Activated T-helper 2 cell treated with anti-CD3 and anti-CD28 coated beads, Interferon-gamma antibody, Interleukin-2, Interleukin-4, amounts not matched to agents 10 μg/mL and 5 μg/mL and 100 μg/mL, durations not matched to agents 14 hours and 24 hours and 36 hours (primary cell): ENCODE measurements at regions of chr6 and their contacts with region 1.

Region 1: DNA sequence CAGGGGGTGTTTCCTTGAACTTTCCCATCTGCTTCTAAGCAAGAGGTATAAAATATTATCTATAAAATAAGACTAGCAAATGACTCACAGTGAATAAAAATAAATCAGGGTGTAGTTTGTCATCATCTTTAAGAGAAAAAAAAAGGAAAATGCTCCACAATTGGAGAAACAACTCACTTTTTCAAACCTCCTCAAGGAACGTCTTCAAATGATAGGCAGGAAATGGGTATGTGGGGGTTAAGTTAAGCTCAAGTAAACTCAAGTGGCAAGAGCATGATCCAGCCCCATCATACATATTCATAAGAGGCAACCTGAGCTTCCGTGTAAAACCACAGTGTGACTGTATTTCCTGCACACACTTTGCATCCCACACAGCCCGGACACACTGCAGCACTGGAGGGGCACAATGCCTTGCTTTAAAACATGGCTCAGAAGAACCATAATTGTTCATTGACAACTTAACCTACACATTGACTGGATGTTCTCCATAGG is 58.5 kb upstream of the CEP85L start:
- DNase-seq: peak; percentile 73
- H3K4me3 Mint-ChIP-seq: peak overlapping the region; percentile 97
- H3K27ac Mint-ChIP-seq: peak overlapping the region; percentile 96
- H3K4me1 Mint-ChIP-seq: peaks cover 77% of the 10 kb centered on the region
- H3K27me3 Mint-ChIP-seq: no peaks in the 10 kb centered on the region

Region 2: DNA sequence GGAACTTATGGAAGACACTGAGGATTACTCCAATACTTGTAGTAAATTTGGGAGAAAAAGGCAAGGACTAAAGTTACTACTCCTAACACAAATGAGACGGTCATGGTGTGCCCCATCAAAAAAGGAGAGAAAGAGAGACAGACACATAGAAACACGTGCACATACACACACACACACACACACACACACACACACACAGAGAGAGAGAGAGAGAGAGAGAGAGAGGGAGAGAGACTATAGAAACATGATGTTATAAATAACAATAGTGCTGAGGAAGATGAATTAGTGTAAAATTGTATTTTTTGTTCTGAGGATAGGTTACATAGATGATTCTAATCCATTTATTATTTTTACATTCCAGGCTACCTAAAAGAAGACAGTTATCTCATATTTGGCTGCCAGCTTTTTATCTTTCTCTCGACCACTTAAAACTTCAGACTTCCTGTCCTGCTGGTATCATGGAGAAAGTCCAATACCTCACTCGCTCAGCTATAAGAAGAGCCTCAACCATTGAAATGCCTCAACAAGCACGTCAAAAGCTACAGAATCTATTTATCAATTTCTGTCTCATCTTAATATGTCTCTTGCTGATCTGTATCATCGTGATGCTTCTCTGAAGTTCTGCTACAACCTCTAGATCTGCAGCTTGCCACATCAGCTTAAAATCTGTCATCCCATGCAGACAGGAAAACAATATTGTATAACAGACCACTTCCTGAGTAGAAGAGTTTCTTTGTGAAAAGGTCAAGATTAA is 151.3 kb before region 1 on chr6:
- intact Hi-C with region 1: loop called (anchors 5 kb)
- DNase-seq: no peak
- H3K4me3 Mint-ChIP-seq: peak overlapping the region; percentile 69
- H3K27ac Mint-ChIP-seq: peak overlapping the region; percentile 92
- H3K4me1 Mint-ChIP-seq: peaks cover 25% of the 10 kb centered on the region
- H3K27me3 Mint-ChIP-seq: no peaks in the 10 kb centered on the region

Region 3: GRCh38 chr6:118663993-118664985 is 45.6 kb before region 1 on chr6:
- intact Hi-C with region 1: loop called (anchors 1 kb)
- DNase-seq: no peak
- H3K4me3 Mint-ChIP-seq: peak overlapping the region; percentile 86
- H3K27ac Mint-ChIP-seq: peak overlapping the region; percentile 96
- H3K4me1 Mint-ChIP-seq: peaks cover 58% of the 10 kb centered on the region
- H3K27me3 Mint-ChIP-seq: no peaks in the 10 kb centered on the region

Region 4: DNA sequence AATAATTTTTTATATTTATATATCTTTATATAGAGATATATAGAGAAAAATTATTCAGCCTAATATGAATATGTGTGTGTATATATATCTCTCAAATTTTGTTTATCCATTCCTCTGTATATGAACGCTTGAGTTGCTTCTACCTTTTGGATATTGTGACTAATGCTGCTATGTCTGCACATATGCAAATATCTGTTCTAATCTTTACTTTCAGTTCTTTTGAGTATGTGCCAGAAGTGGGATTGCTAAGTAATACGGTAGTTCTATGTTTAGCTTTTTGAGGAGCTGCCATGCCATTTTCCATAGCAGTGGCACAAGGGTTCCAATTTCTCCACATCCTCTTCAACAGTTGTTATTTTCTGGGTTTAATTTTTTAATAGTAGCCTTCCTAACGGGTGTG is 14.3 kb after region 1 on chr6:
- intact Hi-C with region 1: loop called (anchors 1 kb)
- DNase-seq: no peak
- H3K4me3 Mint-ChIP-seq: peak overlapping the region; percentile 4
- H3K27ac Mint-ChIP-seq: peak overlapping the region; percentile 75
- H3K4me1 Mint-ChIP-seq: peaks cover 54% of the 10 kb centered on the region
- H3K27me3 Mint-ChIP-seq: no peaks in the 10 kb centered on the region

Region 5: GRCh38 chr6:118776607-118777549 is 67.0 kb after region 1 on chr6:
- intact Hi-C with region 1: loop called (anchors 1 kb)
- DNase-seq: peak; percentile 56
- H3K4me3 Mint-ChIP-seq: no peak overlapping the region
- H3K27ac Mint-ChIP-seq: no peak overlapping the region
- H3K4me1 Mint-ChIP-seq: peaks cover 12% of the 10 kb centered on the region
- H3K27me3 Mint-ChIP-seq: peaks cover 2% of the 10 kb centered on the region

Region 6: GRCh38 chr6:119313937-119314884 is 604.3 kb after region 1 on chr6:
- intact Hi-C with region 1: loop called (anchors 10 kb)
- DNase-seq: peak; percentile 39
- H3K4me3 Mint-ChIP-seq: peak overlapping the region; percentile 66
- H3K27ac Mint-ChIP-seq: peak overlapping the region; percentile 99
- H3K4me1 Mint-ChIP-seq: peaks cover 80% of the 10 kb centered on the region
- H3K27me3 Mint-ChIP-seq: no peaks in the 10 kb centered on the region